Kidney (tissue), 22 donors: ENCODE measurements at regions of chr2 and their contacts with region 1.

Region 1: GRCh38 chr2:219155054-219155644 is 5.5 kb downstream of the NHEJ1 start:
- DNase-seq: peak in 3 of 5 donors; percentile 50 to 93 (median 85)
- H3K4me3 ChIP-seq: no peak overlapping the region
- H3K27ac ChIP-seq: no peak overlapping the region
- H3K4me1 ChIP-seq: no peaks in the 10 kb centered on the region
- H3K27me3 ChIP-seq: no peaks in the 10 kb centered on the region
- CTCF ChIP-seq: peak; percentile 65

Region 2: GRCh38 chr2:219057709-219058540 is 97.2 kb before region 1 on chr2:
- intact Hi-C with region 1: loop called (anchors 10 kb)
- DNase-seq: peak; percentile 69 to 90 (median 77)
- H3K4me3 ChIP-seq: peak overlapping the region in 2 of 3 donors; percentile 26 to 47
- H3K27ac ChIP-seq: no peak overlapping the region
- H3K4me1 ChIP-seq: peaks cover 0 to 14% (median 6%) of the 10 kb centered on the region in 3 donors
- H3K27me3 ChIP-seq: peaks cover 45% of the 10 kb centered on the region
- CTCF ChIP-seq: peak; percentile 86